ENCODE measurements at regions of chr3 and their contacts with region 1.

Region 1: GRCh38 chr3:20154931-20155330 is 31.1 kb downstream of the SGO1 start:
- DNase-seq: no peak
- ATAC-seq: no peak
- H3K4me3 ChIP-seq: no peak overlapping the region
- H3K4me3 Mint-ChIP-seq: no peak overlapping the region
- H3K27ac ChIP-seq: no peak overlapping the region
- H3K27ac Mint-ChIP-seq: no peak overlapping the region
- H3K4me1 ChIP-seq: peaks cover under 1 to 2% of the 10 kb centered on the region in 2 experiments
- H3K4me1 Mint-ChIP-seq: peaks cover 5 to 8% (median 6%) of the 10 kb centered on the region in 3 donors
- H3K27me3 ChIP-seq: no peaks in the 10 kb centered on the region
- H3K27me3 Mint-ChIP-seq: no peaks in the 10 kb centered on the region

Region 2: DNA sequence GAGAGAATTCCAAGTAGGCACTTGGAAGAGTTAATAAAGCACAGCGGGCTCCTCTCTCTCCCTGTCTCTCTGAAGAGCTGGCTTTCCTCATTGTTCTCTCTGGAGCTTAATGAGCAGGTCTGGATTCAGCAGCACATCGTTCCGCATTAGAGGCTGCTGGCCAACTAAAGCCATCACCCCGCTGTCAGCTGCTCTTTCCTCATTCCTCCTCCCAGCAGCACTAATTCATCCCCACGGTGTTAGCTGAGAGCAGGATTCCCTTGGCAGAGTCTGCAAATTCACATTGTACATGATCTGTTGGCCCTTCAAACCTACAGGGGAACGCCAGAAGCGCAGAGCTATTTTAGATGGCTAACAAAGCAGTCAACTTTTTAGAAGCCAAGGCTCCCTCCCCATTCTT is 13.1 kb before region 1 on chr3:
- CTCF ChIA-PET with region 1: interaction called, 3 to 6 read pairs
- POLR2A ChIA-PET with region 1: interaction called in 1 of 2 experiments, 10 read pairs
- DNase-seq: no peak
- ATAC-seq: no peak
- H3K4me3 ChIP-seq: no peak overlapping the region
- H3K4me3 Mint-ChIP-seq: no peak overlapping the region
- H3K27ac ChIP-seq: no peak overlapping the region
- H3K27ac Mint-ChIP-seq: no peak overlapping the region
- H3K4me1 ChIP-seq: no peaks in the 10 kb centered on the region
- H3K4me1 Mint-ChIP-seq: peaks cover 0 to 3% (median 0%) of the 10 kb centered on the region in 3 donors
- H3K27me3 ChIP-seq: no peaks in the 10 kb centered on the region
- H3K27me3 Mint-ChIP-seq: no peaks in the 10 kb centered on the region

Measured in T-cell (primary cell).